ENCODE measurements at regions of chr2 and their contacts with region 1.

Region 1: DNA sequence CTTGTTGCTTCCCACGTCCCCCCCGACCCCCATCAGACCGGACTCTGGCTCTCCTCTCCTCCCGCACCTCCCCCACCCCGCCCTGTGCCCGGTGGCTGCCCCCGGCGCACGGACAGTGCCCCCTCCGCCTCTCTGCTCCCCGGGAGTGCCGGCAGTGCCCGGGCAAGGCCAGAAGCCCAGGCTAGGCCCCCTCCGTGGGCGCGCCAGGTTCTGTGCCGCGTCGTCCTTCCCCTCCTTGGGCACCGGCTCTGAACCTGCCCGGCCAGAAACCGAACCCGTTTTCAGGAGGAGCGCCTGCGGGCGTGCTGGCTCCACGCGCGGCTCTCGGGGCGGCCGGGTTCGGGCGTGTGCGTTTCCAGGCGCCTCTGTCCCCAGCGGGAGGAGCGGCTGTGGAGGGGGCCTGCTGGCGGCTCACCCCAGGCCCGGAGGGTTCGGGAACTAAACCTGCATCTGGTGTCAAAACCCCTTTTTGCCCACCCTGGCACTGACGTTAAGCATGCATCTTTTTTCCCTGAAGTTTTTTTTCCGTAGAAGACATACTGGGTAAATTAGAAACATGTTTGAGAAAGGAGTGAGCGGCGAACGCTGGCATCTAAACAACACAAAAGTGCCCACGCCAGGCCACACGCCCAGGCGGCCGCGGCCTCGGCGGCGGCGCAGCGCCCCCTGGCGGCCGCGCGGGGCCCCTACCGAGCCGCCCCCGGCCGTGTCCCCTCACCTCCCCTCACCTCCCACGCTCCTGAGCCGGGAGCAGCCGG is 123.9 kb upstream of the SLC1A4 start:
- DNase-seq: peak; percentile 74
- ATAC-seq: peak; percentile 76

Region 2: GRCh38 chr2:64601034-64601754 is 264.1 kb before region 1 on chr2:
- intact Hi-C with region 1: loop called (anchors 5 kb)
- DNase-seq: no peak
- ATAC-seq: peak; percentile 18

Region 3: GRCh38 chr2:64644177-64645004 is 220.9 kb before region 1 on chr2:
- intact Hi-C with region 1: loop called (anchors 5 kb)
- DNase-seq: peak; percentile 87
- ATAC-seq: peak; percentile 95

Measured in sciatic nerve (tissue), 2 donors.